Activated CD8-positive, alpha-beta T cell treated with anti-CD3 and anti-CD28 coated beads for 36 hours (primary cell): ENCODE measurements at regions of chr2 and their contacts with region 1.

Region 1: GRCh38 chr2:237744613-237745249 is 53.8 kb upstream of the RBM44 start:
- DNase-seq: peak; percentile 77
- ATAC-seq: peak; percentile 81
- H3K4me3 Mint-ChIP-seq: no peak overlapping the region
- H3K27ac Mint-ChIP-seq: peak overlapping the region; percentile 67
- H3K4me1 Mint-ChIP-seq: peaks cover 39% of the 10 kb centered on the region
- H3K27me3 Mint-ChIP-seq: no peaks in the 10 kb centered on the region
- CTCF ChIP-seq: peak; percentile 94

Region 2: GRCh38 chr2:237572021-237572741 is 172.6 kb before region 1 on chr2:
- CTCF ChIA-PET with region 1: interaction called, 10 read pairs
- POLR2A ChIA-PET with region 1: no interaction called
- intact Hi-C with region 1: no loop called
- DNase-seq: peak; percentile 90
- ATAC-seq: peak; percentile 98
- H3K4me3 Mint-ChIP-seq: no peak overlapping the region
- H3K27ac Mint-ChIP-seq: no peak overlapping the region
- H3K4me1 Mint-ChIP-seq: peaks cover 6% of the 10 kb centered on the region
- H3K27me3 Mint-ChIP-seq: peaks cover 3% of the 10 kb centered on the region
- CTCF ChIP-seq: peak; percentile 98

Region 3: DNA sequence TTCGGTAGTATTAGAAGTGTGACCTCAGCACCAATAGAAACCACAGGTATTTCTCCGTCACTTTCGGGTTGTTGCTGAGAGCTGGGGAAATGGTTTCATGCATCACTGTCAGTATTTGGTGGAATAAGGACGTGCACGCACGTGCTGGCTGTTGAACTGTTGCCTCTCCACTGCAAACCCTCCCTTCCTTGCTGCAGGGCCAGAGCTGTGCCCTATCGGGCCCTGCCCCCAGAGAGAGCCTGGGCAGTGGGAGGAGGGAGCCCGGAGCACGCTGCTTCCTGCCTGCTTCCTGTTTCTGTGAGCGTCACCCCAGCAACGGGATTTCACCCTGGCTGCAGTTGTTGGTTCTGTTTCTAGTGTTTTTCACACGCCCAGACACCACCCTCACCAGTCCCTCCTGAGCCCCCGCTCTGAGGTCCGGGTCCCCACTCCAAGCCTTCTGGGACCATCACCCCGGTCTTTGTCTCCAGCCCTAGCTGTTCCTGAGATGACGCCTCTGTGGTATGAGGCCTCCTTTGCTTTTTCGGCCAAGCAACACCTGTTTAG is 69.9 kb before region 1 on chr2:
- CTCF ChIA-PET with region 1: interaction called, 125 read pairs
- POLR2A ChIA-PET with region 1: interaction called, 4 read pairs
- intact Hi-C with region 1: loop called (anchors 1 kb)
- DNase-seq: peak; percentile 88
- ATAC-seq: peak; percentile 67
- H3K4me3 Mint-ChIP-seq: peak overlapping the region; percentile 73
- H3K27ac Mint-ChIP-seq: peak overlapping the region; percentile 93
- H3K4me1 Mint-ChIP-seq: peaks cover 43% of the 10 kb centered on the region
- H3K27me3 Mint-ChIP-seq: no peaks in the 10 kb centered on the region
- CTCF ChIP-seq: no peak

Region 4: DNA sequence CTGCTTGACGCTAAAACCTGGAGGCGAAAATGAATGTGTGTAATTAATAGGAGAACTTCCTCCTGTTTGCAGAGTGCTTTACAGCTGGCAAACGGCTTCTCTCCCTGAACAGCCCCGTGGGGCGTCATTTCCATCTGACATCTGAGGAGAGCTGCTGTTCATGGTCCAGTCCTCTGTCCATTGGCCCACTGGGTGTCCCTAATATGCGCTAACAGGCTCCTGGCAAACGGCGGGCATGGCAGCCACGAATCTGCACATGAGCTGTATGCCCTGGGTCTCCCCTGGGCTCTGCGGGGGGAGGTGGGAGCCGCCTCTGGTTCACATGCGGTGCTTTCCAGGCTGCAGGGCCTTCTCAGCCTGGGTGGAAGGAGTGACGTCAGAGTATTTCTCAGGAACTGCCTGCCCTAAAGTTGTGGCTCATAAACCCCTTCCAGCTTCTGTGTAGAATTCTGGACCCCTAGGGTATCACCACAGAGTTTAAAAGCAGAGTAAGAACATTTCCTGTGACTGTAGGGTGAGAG is 44.2 kb before region 1 on chr2:
- CTCF ChIA-PET with region 1: interaction called, 17 read pairs
- POLR2A ChIA-PET with region 1: interaction called, 3 read pairs
- intact Hi-C with region 1: no loop called
- DNase-seq: peak; percentile 92
- ATAC-seq: peak; percentile 67
- H3K4me3 Mint-ChIP-seq: peak overlapping the region; percentile 67
- H3K27ac Mint-ChIP-seq: peak overlapping the region; percentile 98
- H3K4me1 Mint-ChIP-seq: peaks cover 93% of the 10 kb centered on the region
- H3K27me3 Mint-ChIP-seq: no peaks in the 10 kb centered on the region
- CTCF ChIP-seq: no peak

Region 5: GRCh38 chr2:237731663-237732062 is 13.1 kb before region 1 on chr2:
- CTCF ChIA-PET with region 1: interaction called, 55 read pairs
- POLR2A ChIA-PET with region 1: interaction called, 8 read pairs
- intact Hi-C with region 1: no loop called
- DNase-seq: peak; percentile 76
- ATAC-seq: peak; percentile 96
- H3K4me3 Mint-ChIP-seq: peak overlapping the region; percentile 26
- H3K27ac Mint-ChIP-seq: peak overlapping the region; percentile 82
- H3K4me1 Mint-ChIP-seq: peaks cover 57% of the 10 kb centered on the region
- H3K27me3 Mint-ChIP-seq: no peaks in the 10 kb centered on the region
- CTCF ChIP-seq: no peak

Region 6: DNA sequence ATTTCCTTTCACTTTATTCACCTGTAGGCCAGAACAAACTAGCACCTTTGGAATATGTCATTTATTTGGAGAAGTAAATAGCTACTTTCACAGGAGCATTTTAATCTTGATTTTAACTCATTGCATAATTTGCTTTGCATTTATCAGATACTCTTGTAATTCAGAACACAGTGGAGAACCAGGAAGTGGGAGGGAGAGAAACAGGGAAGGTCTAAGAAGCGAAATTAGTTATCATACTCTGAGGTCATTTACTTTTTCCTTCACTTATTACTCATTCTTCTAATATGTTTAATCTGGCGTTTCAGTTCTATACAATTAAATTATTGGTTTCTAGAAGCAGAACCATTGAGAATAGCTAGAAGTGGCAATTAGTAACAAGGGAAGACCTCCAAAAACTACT is 74.5 kb after region 1 on chr2:
- CTCF ChIA-PET with region 1: no interaction called
- POLR2A ChIA-PET with region 1: no interaction called
- intact Hi-C with region 1: no loop called
- DNase-seq: no peak
- ATAC-seq: no peak
- H3K4me3 Mint-ChIP-seq: no peak overlapping the region
- H3K27ac Mint-ChIP-seq: no peak overlapping the region
- H3K4me1 Mint-ChIP-seq: peaks cover 3% of the 10 kb centered on the region
- H3K27me3 Mint-ChIP-seq: no peaks in the 10 kb centered on the region
- CTCF ChIP-seq: no peak